ENCODE measurements at regions of chr12 and their contacts with region 1.

Region 1: GRCh38 chr12:80936498-80937390 is 990 bp downstream of the LIN7A start:
- DNase-seq: peak; percentile 39 to 62 (median 50)
- H3K4me3 ChIP-seq: peak overlapping the region; percentile 78
- H3K27ac ChIP-seq: peak overlapping the region; percentile 72 to 80
- H3K4me1 ChIP-seq: no peaks in the 10 kb centered on the region
- H3K27me3 ChIP-seq: no peaks in the 10 kb centered on the region
- CTCF ChIP-seq: no peak
- EP300 ChIP-seq: no peak
- POLR2A ChIP-seq: no peak

Region 2: GRCh38 chr12:80837348-80837985 is 99.3 kb before region 1 on chr12:
- intact Hi-C with region 1: loop called in 1 of 4 experiments (anchors 10 kb)
- DNase-seq: peak in 2 of 5 donors; percentile 21 to 24
- H3K4me3 ChIP-seq: no peak overlapping the region
- H3K27ac ChIP-seq: no peak overlapping the region
- H3K4me1 ChIP-seq: no peaks in the 10 kb centered on the region
- H3K27me3 ChIP-seq: no peaks in the 10 kb centered on the region
- CTCF ChIP-seq: peak in 2 of 3 donors; percentile 23 to 29
- EP300 ChIP-seq: no peak
- POLR2A ChIP-seq: no peak

Region 3: GRCh38 chr12:81034926-81035325 is 98.2 kb after region 1 on chr12:
- intact Hi-C with region 1: no loop called
- DNase-seq: no peak
- H3K4me3 ChIP-seq: no peak overlapping the region
- H3K27ac ChIP-seq: no peak overlapping the region
- H3K4me1 ChIP-seq: no peaks in the 10 kb centered on the region
- H3K27me3 ChIP-seq: no peaks in the 10 kb centered on the region
- CTCF ChIP-seq: no peak
- EP300 ChIP-seq: no peak
- POLR2A ChIP-seq: no peak

Region 4: DNA sequence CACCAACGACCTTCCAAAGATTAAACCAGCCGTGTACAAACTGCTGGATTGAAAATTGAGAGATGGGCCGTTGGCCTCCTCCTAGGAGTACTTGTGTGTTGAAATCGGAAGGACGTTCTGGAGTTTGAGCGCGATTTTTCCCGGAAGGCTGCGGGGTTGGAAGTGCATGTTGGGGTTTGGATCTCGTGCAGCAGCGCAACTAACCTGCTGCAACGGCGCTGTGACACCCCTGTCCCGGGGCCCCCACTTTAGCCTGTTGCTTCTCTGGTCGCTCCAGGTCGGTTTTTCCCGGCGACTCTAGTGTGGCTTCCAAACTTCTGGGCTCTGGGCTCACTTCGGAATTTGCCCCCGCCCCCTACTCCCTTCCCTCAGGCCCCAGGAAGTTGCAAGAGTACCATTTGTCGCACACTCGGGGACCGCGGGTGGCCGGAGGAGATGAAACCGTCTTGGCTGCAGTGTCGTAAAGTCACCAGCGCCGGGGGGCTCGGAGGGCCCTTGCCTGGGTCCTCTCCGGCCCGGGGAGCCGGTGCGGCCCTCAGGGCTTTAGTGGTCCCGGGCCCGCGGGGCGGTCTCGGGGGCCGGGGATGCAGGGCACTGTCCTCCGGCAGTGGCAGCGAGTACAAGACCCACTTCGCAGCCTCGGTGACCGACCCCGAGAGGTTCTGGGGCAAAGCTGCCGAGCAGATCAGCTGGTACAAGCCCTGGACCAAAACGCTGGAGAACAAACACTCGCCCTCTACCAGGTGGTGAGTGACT is 141.1 kb after region 1 on chr12 and contains the start of gene ACSS3:
- intact Hi-C with region 1: loop called in 1 of 4 experiments (anchors 10 kb)
- DNase-seq: peak; percentile 64 to 75 (median 70)
- H3K4me3 ChIP-seq: peak within 1 kb of the TSS; percentile 87
- H3K27ac ChIP-seq: peak within 1 kb of the TSS; percentile 87 to 89
- H3K4me1 ChIP-seq: peaks cover 14% of the 10 kb centered on the region
- H3K27me3 ChIP-seq: no peaks in the 10 kb centered on the region
- CTCF ChIP-seq: no peak
- EP300 ChIP-seq: no peak
- POLR2A ChIP-seq: no peak
- total RNA-seq, gene ACSS3: 29.9 to 67.0 (median 43.7) TPM

Region 5: GRCh38 chr12:81314903-81315531 is 378.3 kb after region 1 on chr12:
- intact Hi-C with region 1: no loop called
- DNase-seq: no peak
- H3K4me3 ChIP-seq: no peak overlapping the region
- H3K27ac ChIP-seq: no peak overlapping the region
- H3K4me1 ChIP-seq: no peaks in the 10 kb centered on the region
- H3K27me3 ChIP-seq: no peaks in the 10 kb centered on the region
- CTCF ChIP-seq: no peak
- EP300 ChIP-seq: no peak
- POLR2A ChIP-seq: no peak